Mammary epithelial cell (primary cell): ENCODE measurements at regions of chr13 and their contacts with region 1.

Region 1: GRCh38 chr13:102402290-102402689 is 442 bp upstream of the FGF14 start:
- DNase-seq: no peak
- H3K4me3 ChIP-seq: peak overlapping the region in 1 of 3 experiments; percentile 30
- H3K27ac ChIP-seq: no peak overlapping the region
- H3K4me1 ChIP-seq: peaks cover 14% of the 10 kb centered on the region
- H3K27me3 ChIP-seq: peaks cover 3% of the 10 kb centered on the region
- CTCF ChIP-seq: no peak

Region 2: GRCh38 chr13:102267191-102267590 is 135.1 kb before region 1 on chr13:
- CTCF ChIA-PET with region 1: no interaction called
- dilution Hi-C with region 1: no loop called
- in situ Hi-C with region 1: no loop called
- intact Hi-C with region 1: no loop called
- DNase-seq: no peak
- H3K4me3 ChIP-seq: no peak overlapping the region
- H3K27ac ChIP-seq: no peak overlapping the region
- H3K4me1 ChIP-seq: no peaks in the 10 kb centered on the region
- H3K27me3 ChIP-seq: no peaks in the 10 kb centered on the region
- CTCF ChIP-seq: no peak

Region 3: DNA sequence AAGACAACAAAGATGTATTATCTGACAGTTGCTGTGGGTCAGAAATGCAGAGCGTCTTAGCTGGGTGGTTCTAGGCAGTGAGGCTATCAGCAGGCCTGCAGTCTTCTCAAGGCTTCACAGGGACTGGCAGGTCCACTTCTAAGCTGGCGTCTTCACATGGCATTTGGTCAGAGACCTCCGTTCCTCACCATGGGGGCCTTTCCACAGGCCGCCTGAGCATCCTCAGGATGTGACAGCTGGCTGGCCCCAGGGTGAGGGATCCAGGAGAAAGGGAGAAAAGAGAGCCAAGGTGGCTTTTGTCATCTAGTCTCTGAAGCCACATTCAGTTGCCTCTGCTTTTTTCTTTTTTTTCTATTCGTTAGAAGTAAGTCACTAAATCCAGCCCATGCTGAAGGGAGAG is 50.8 kb before region 1 on chr13:
- CTCF ChIA-PET with region 1: no interaction called
- dilution Hi-C with region 1: loop called (anchors 10 kb)
- in situ Hi-C with region 1: no loop called
- intact Hi-C with region 1: no loop called
- DNase-seq: no peak
- H3K4me3 ChIP-seq: no peak overlapping the region
- H3K27ac ChIP-seq: no peak overlapping the region
- H3K4me1 ChIP-seq: no peaks in the 10 kb centered on the region
- H3K27me3 ChIP-seq: no peaks in the 10 kb centered on the region
- CTCF ChIP-seq: no peak